GM12878 (cell line): ENCODE measurements at regions of chr5 and their contacts with region 1.

Region 1: GRCh38 chr5:28408186-28408585 is 1369.8 kb upstream of the CDH9 start:
- DNase-seq: no peak
- ATAC-seq: no peak
- H3K4me3 ChIP-seq: no peak overlapping the region
- H3K27ac ChIP-seq: no peak overlapping the region
- H3K4me1 ChIP-seq: no peaks in the 10 kb centered on the region
- H3K27me3 ChIP-seq: no peaks in the 10 kb centered on the region
- CTCF ChIP-seq: no peak
- EP300 ChIP-seq: no peak
- POLR2A ChIP-seq: no peak
- RAD21 ChIP-seq: no peak

Region 2: GRCh38 chr5:28397502-28397941 is 10.7 kb before region 1 on chr5:
- CTCF ChIA-PET with region 1: no interaction called
- POLR2A ChIA-PET with region 1: no interaction called
- RAD21 ChIA-PET with region 1: no interaction called
- SMC1A ChIA-PET with region 1: interaction called, 14 read pairs
- in situ Hi-C with region 1: no loop called
- intact Hi-C with region 1: no loop called
- DNase-seq: no peak
- ATAC-seq: no peak
- H3K4me3 ChIP-seq: no peak overlapping the region
- H3K27ac ChIP-seq: no peak overlapping the region
- H3K4me1 ChIP-seq: no peaks in the 10 kb centered on the region
- H3K27me3 ChIP-seq: no peaks in the 10 kb centered on the region
- CTCF ChIP-seq: no peak
- EP300 ChIP-seq: no peak
- POLR2A ChIP-seq: no peak
- RAD21 ChIP-seq: no peak